Gastrocnemius medialis (tissue), 4 donors: ENCODE measurements at regions of chr15 and their contacts with region 1.

Region 1: GRCh38 chr15:66946578-66947164 is 118.7 kb upstream of the SMAD3 start:
- DNase-seq: peak; percentile 39 to 62
- ATAC-seq: peak; percentile 75 to 78
- H3K4me3 ChIP-seq: no peak overlapping the region
- H3K27ac ChIP-seq: no peak overlapping the region
- H3K4me1 ChIP-seq: no peaks in the 10 kb centered on the region
- H3K27me3 ChIP-seq: no peaks in the 10 kb centered on the region
- CTCF ChIP-seq: peak; percentile 88 to 95 (median 93)
- POLR2A ChIP-seq: no peak

Region 2: DNA sequence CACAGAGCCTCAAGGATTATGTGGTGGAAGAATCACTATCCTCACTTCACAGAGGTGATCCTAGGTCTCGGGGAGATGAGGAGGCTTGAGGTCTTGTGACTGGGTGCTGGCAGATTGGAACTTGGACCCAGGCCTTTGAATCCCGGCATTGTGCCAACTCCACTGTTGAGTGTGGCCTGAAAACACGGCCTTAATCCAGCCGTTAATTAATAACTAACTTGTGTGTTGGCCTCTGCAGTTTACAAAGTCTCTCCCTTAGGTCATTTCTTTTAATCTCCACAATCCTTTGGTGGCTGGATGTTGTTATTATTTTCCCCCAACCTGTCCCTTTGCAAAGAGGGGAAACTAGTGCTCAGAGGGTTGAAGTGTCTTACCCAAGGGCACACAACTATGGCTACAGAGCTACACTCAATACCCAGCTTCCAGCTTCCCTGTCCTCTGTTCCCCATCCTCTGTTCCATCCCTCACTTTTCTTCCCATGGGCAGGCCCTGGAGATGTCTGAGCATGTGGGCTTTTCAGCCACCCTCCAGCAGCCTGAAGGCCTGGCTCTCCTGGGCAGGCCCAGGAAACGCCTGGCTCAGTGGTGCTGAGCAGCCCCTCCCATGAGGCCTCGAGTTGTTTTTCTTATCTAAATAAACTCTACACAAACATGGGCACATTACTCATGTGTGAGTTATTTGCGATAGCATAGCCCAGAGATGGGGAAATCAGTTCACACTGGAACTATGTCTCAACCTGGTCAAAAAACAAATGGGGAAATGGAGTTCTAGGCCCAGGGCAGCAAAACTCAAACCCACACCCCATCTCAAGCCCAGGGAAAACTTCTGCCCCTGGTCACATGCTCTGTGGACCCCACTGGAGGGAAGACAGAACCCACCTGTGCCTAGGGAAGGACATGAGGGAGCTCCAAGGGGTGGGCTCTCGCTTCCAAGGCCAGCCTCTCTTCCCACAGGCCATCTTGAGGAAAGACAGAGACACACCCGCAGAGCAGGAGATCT is 101.9 kb after region 1 on chr15:
- in situ Hi-C with region 1: no loop called
- intact Hi-C with region 1: loop called (anchors 10 kb)
- DNase-seq: peak in 1 of 2 donors; percentile 48
- ATAC-seq: peak; percentile 81 to 91
- H3K4me3 ChIP-seq: no peak overlapping the region
- H3K27ac ChIP-seq: peak overlapping the region; percentile 3 to 73 (median 42)
- H3K4me1 ChIP-seq: peaks cover 8 to 25% of the 10 kb centered on the region in 2 donors
- H3K27me3 ChIP-seq: no peaks in the 10 kb centered on the region
- CTCF ChIP-seq: no peak
- POLR2A ChIP-seq: peak in 1 of 2 donors; percentile 42